ENCODE measurements at regions of chrX and their contacts with region 1.

Region 1: DNA sequence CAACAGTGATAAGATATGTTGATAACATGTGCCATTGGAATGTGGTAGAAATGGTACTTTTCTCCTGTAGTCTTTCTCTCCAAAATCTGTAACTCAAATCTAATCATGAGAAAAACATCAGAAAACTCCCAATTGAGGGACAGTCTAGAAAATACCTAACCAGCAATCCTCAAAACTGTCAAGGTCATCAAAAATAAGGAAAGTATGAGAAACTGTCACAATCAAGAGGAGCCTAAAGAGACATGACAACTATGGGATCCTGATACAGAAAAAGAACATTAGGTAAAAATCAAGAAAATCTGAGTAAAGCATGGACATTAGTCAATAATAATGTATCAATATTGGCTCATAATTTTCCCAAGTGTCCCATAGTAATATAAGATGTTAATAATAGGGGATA is 124.5 kb upstream of the PPP1R2C start:
- DNase-seq: no peak
- ATAC-seq: no peak
- H3K4me3 ChIP-seq: no peak overlapping the region
- H3K27ac ChIP-seq: no peak overlapping the region
- H3K4me1 ChIP-seq: no peaks in the 10 kb centered on the region
- H3K27me3 ChIP-seq: no peaks in the 10 kb centered on the region
- CTCF ChIP-seq: no peak
- POLR2A ChIP-seq: no peak
- RAD21 ChIP-seq: no peak

Region 2: GRCh38 chrX:41750716-41751115 is 1151.8 kb before region 1 on chrX:
- CTCF ChIA-PET with region 1: no interaction called
- POLR2A ChIA-PET with region 1: interaction called, 18 read pairs
- dilution Hi-C with region 1: no loop called
- in situ Hi-C with region 1: no loop called
- intact Hi-C with region 1: no loop called
- DNase-seq: no peak
- ATAC-seq: no peak
- H3K4me3 ChIP-seq: no peak overlapping the region
- H3K27ac ChIP-seq: no peak overlapping the region
- H3K4me1 ChIP-seq: no peaks in the 10 kb centered on the region
- H3K27me3 ChIP-seq: no peaks in the 10 kb centered on the region
- CTCF ChIP-seq: no peak
- POLR2A ChIP-seq: no peak
- RAD21 ChIP-seq: no peak

Measured in IMR-90 (cell line).